Head of caudate nucleus (tissue), 42 donors: ENCODE measurements at regions of chr2 and their contacts with region 1.

Region 1: GRCh38 chr2:100818606-100819369 is 1.2 kb upstream of the NPAS2 start:
- DNase-seq: peak in 36 of 42 donors; percentile 29 to 78 (median 48)

Region 2: DNA sequence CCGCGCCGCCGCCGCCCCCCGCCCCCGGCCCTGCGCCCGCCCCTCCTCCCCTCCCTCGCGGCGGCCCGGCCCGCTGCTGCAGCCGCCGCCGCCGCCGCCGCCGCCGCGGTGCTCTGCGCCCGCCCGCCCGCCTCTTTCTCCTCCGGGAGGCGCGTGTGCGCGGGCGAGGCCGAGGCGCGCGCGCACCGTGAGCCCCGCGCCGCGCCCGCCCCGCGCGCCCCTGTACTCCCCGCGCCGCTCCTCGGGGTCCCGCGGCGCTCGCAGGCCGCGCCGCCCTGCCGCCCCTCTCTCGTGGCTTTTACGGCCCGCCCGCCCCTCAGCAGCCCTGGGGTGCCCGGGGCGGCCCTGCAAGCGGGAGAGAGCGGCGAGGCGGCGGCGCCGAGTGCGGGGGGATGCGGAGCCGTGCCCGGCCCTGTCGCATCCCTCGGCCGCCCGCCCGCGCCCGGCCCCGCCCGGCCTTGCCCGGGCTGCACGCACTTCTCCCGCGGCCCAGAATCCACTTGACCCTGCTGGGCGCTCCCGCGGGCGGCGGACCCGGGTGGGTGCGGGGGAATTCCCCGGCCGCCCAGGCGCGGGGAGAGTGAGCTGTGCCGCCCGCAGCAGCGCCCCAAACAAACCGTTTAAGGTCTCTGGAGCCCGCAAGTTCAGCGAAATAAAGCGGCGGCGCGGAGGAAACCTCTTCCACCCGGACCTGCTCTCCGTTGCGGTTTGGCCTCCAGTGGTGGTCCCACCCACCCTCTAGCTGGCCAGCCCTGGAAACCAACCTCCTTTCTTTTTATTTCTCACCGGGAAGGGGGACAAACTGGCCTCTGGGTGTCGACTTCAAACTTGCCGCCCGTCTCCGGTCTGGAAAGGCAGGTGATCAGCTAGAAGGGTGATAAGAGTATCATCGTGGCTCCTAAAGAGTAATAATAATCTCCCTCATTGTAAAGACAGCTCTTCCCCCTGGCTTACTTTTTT is 713.8 kb before region 1 on chr2:
- intact Hi-C with region 1: no loop called
- DNase-seq: peak in 27 of 42 donors; percentile 13 to 60 (median 39)

Region 3: GRCh38 chr2:100381240-100381639 is 437.5 kb before region 1 on chr2:
- intact Hi-C with region 1: no loop called
- DNase-seq: peak; percentile 51 to 95 (median 86)

Region 4: GRCh38 chr2:100653449-100654035 is 165.2 kb before region 1 on chr2:
- intact Hi-C with region 1: no loop called
- DNase-seq: no peak

Region 5: GRCh38 chr2:100935372-100935752 is 116.6 kb after region 1 on chr2:
- intact Hi-C with region 1: no loop called
- DNase-seq: peak in 5 of 42 donors; percentile 1 to 19 (median 16)

Region 6: GRCh38 chr2:100984892-100985379 is 166.1 kb after region 1 on chr2:
- intact Hi-C with region 1: loop called (anchors 10 kb)
- DNase-seq: peak; percentile 62 to 91 (median 81)